Naive thymus-derived CD4-positive, alpha-beta T cell (primary cell): ENCODE measurements at regions of chr7 and their contacts with region 1.

Region 1: DNA sequence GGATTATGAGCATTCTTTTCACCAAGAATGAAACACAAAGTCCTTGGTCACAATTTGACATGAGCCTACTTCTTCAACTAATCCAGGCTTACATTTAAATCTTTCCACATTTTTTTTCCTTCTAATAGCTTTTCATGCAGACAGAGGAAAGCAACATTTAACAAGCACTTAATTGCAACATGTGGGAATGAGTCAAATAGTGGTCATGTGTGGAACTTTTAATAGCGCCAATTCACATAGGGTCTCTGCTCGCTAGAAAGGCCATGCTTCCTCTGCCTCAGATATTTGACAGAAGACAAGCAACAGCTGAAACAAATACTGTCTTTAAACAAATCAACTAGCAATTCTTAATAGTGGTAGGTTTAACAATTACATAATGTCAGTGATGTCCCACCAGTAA is 285.9 kb upstream of the ETV1 start:
- DNase-seq: no peak
- ATAC-seq: no peak
- H3K4me3 ChIP-seq: no peak overlapping the region
- H3K4me3 Mint-ChIP-seq: no peak overlapping the region
- H3K27ac ChIP-seq: no peak overlapping the region
- H3K27ac Mint-ChIP-seq: no peak overlapping the region
- H3K4me1 ChIP-seq: no peaks in the 10 kb centered on the region
- H3K4me1 Mint-ChIP-seq: no peaks in the 10 kb centered on the region
- H3K27me3 ChIP-seq: no peaks in the 10 kb centered on the region
- H3K27me3 Mint-ChIP-seq: peaks cover 0 to 12% (median 0%) of the 10 kb centered on the region in 5 donors

Region 2: GRCh38 chr7:13117103-13117502 is 1158.3 kb before region 1 on chr7:
- CTCF ChIA-PET with region 1: no interaction called
- POLR2A ChIA-PET with region 1: no interaction called
- intact Hi-C with region 1: no loop called
- DNase-seq: no peak
- ATAC-seq: no peak
- H3K4me3 ChIP-seq: no peak overlapping the region
- H3K4me3 Mint-ChIP-seq: no peak overlapping the region
- H3K27ac ChIP-seq: no peak overlapping the region
- H3K27ac Mint-ChIP-seq: no peak overlapping the region
- H3K4me1 ChIP-seq: no peaks in the 10 kb centered on the region
- H3K4me1 Mint-ChIP-seq: no peaks in the 10 kb centered on the region
- H3K27me3 ChIP-seq: no peaks in the 10 kb centered on the region
- H3K27me3 Mint-ChIP-seq: peaks cover 0 to 5% (median 3%) of the 10 kb centered on the region in 5 donors

Region 3: DNA sequence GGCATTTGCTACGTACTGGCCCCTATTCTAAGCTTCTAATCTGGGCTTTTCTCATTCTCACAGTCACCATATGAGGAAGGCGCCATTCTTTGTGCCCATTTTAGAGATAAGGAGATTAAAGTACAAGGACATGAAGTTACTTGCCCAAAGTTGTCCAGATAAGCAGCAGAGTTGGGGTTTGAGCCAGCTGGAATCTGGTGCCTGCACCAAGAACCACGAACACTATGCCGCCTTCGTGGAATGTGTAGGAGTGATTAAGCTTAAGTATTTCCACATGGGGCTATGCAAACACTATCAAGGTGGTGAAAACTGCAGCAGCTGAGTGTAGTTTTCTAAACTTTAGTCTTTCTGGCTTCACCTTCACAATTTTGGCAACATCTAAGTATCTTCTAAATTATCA is 56.8 kb after region 1 on chr7:
- CTCF ChIA-PET with region 1: no interaction called
- POLR2A ChIA-PET with region 1: no interaction called
- intact Hi-C with region 1: loop called in 1 of 2 experiments (anchors 10 kb)
- DNase-seq: no peak
- ATAC-seq: no peak
- H3K4me3 ChIP-seq: no peak overlapping the region
- H3K4me3 Mint-ChIP-seq: no peak overlapping the region
- H3K27ac ChIP-seq: no peak overlapping the region
- H3K27ac Mint-ChIP-seq: no peak overlapping the region
- H3K4me1 ChIP-seq: no peaks in the 10 kb centered on the region
- H3K4me1 Mint-ChIP-seq: no peaks in the 10 kb centered on the region
- H3K27me3 ChIP-seq: no peaks in the 10 kb centered on the region
- H3K27me3 Mint-ChIP-seq: no peaks in the 10 kb centered on the region